ENCODE measurements at regions of chr7 and their contacts with region 1.

Region 1: GRCh38 chr7:97971990-97972943 is 17.7 kb downstream of the OCM2 start:
- DNase-seq: peak; percentile 93
- ATAC-seq: peak; percentile 97
- H3K4me3 Mint-ChIP-seq: peak overlapping the region; percentile 98
- H3K27ac Mint-ChIP-seq: peak overlapping the region; percentile 97
- H3K4me1 Mint-ChIP-seq: peaks cover 19% of the 10 kb centered on the region
- H3K27me3 Mint-ChIP-seq: no peaks in the 10 kb centered on the region

Region 2: GRCh38 chr7:97117372-97118188 is 854.7 kb before region 1 on chr7 and contains the start of gene SDHAF3:
- CTCF ChIA-PET with region 1: no interaction called
- POLR2A ChIA-PET with region 1: no interaction called
- intact Hi-C with region 1: loop called in 1 of 2 experiments (anchors 1 kb)
- DNase-seq: peak; percentile 99
- ATAC-seq: peak; percentile 95
- H3K4me3 Mint-ChIP-seq: peak within 1 kb of the TSS; percentile 82
- H3K27ac Mint-ChIP-seq: peak within 1 kb of the TSS; percentile 95
- H3K4me1 Mint-ChIP-seq: peaks cover 38% of the 10 kb centered on the region
- H3K27me3 Mint-ChIP-seq: no peaks in the 10 kb centered on the region
- total RNA-seq, gene SDHAF3: 30.2 to 44.3 TPM

Region 3: GRCh38 chr7:97513326-97513725 is 458.9 kb before region 1 on chr7:
- CTCF ChIA-PET with region 1: no interaction called
- POLR2A ChIA-PET with region 1: no interaction called
- intact Hi-C with region 1: no loop called
- DNase-seq: no peak
- ATAC-seq: no peak
- H3K4me3 Mint-ChIP-seq: no peak overlapping the region
- H3K27ac Mint-ChIP-seq: no peak overlapping the region
- H3K4me1 Mint-ChIP-seq: no peaks in the 10 kb centered on the region
- H3K27me3 Mint-ChIP-seq: peaks cover 2% of the 10 kb centered on the region